ENCODE measurements at regions of chr1 and their contacts with region 1.

Region 1: DNA sequence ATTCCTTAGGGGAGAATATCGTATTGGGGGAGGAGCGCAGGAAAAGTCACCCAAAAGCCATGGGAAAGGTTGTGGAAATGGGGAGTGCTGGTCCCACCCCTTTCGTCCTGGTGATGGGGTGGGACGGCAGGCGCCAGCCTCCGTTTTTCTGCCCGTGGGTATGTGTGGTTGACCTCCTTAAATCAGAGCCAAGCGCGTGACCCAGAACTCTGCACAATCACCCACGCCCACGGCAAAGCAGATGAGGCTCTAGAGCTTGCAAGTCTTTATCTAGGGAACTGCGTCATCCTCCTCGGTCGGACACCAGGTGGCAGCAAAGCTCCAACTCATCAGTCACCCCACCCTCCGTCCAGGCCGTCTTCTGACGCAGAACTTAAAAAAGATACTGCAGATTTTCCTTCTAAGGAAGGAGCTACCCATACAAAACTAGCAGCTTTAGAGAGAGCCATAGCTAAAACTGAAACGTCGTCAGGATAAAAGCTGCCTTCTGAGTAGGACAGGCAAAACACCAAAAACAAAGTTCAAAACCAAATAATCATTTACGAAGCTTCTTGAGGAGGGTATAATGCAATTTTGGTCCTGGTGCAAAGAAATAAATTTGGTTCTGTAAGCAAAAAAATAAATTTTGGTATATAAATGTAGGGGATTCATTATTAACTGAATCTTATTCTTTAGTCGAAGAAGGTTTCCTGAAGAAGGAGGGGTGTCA is 62.0 kb downstream of the TBX19 start:
- DNase-seq: peak; percentile 94
- ATAC-seq: peak; percentile 98
- H3K4me3 Mint-ChIP-seq: no peak overlapping the region
- H3K27ac Mint-ChIP-seq: peak overlapping the region; percentile 64
- H3K4me1 Mint-ChIP-seq: peaks cover 35% of the 10 kb centered on the region
- H3K27me3 Mint-ChIP-seq: peaks cover 4% of the 10 kb centered on the region
- CTCF ChIP-seq: peak; percentile 77

Region 2: DNA sequence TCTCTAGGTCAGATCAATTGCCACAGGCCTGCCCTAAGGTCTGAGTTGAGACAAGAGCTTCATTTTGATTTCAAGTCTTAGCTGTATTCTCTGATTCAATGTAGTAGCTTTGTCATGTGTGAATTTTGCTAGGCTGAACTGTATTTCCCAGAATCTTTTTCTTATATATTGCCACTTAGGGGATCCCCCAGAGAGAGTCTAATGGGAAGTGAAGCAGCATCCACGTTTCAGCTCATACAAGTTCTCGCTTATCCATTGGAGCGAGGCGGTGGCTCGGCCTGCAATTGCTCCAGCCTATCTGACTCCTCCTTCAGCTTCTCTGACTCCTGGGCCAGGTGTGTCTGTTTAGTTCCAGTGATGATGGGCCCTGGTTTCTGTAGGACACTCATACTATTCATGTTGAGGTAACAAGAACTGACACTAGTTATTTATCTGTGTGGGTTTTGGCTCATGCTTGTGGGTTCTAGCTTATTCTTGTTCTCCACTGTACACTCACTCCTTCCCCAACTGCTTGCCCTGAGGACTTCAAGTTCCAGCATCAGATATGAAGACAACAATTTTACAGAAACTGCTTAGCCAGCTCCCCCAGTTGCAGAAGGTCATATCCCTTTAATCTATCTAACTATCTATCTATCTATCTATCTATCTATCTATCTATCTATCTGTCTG is 13.9 kb before region 1 on chr1:
- CTCF ChIA-PET with region 1: interaction called, 21 read pairs
- POLR2A ChIA-PET with region 1: interaction called, 3 read pairs
- intact Hi-C with region 1: no loop called
- DNase-seq: no peak
- ATAC-seq: no peak
- H3K4me3 Mint-ChIP-seq: no peak overlapping the region
- H3K27ac Mint-ChIP-seq: no peak overlapping the region
- H3K4me1 Mint-ChIP-seq: no peaks in the 10 kb centered on the region
- H3K27me3 Mint-ChIP-seq: no peaks in the 10 kb centered on the region
- CTCF ChIP-seq: no peak

Region 3: DNA sequence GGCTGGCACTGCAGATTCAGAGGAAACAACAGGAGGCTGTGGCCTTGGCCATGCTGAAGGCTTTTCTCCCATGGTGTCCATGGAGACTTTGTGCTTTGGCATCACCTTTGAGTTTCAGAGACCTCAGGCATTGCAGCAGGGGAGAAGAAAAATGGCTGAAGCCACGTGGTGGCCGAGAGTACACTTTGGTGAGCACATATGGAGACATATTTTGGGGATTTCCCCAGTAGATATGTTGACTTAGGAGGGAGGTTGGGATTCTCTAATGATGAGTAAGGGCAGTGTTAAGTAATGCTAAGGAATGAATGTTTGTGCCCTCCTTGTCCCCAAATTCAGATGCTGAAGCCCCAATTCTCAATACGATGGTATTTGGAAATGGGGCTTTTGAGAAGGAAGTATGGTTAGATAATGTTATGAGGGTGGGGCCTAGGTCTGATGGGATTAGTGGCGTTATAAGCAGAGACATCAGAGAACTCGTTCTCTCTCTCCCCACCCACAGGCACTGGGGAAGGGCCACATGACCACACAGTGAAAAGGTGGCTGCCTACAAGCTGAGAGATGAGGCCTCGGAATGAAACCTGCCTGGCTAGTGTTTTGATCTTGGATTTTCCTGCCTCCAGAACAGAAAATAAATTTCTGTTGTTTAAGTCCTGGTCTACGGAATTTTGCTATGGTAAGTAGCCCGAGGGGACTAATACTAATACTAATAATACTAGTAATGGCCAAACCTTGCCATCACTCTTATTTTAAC is 36.6 kb after region 1 on chr1:
- CTCF ChIA-PET with region 1: interaction called, 18 read pairs
- POLR2A ChIA-PET with region 1: no interaction called
- intact Hi-C with region 1: no loop called
- DNase-seq: no peak
- ATAC-seq: no peak
- H3K4me3 Mint-ChIP-seq: no peak overlapping the region
- H3K27ac Mint-ChIP-seq: no peak overlapping the region
- H3K4me1 Mint-ChIP-seq: no peaks in the 10 kb centered on the region
- H3K27me3 Mint-ChIP-seq: no peaks in the 10 kb centered on the region
- CTCF ChIP-seq: no peak

Region 4: DNA sequence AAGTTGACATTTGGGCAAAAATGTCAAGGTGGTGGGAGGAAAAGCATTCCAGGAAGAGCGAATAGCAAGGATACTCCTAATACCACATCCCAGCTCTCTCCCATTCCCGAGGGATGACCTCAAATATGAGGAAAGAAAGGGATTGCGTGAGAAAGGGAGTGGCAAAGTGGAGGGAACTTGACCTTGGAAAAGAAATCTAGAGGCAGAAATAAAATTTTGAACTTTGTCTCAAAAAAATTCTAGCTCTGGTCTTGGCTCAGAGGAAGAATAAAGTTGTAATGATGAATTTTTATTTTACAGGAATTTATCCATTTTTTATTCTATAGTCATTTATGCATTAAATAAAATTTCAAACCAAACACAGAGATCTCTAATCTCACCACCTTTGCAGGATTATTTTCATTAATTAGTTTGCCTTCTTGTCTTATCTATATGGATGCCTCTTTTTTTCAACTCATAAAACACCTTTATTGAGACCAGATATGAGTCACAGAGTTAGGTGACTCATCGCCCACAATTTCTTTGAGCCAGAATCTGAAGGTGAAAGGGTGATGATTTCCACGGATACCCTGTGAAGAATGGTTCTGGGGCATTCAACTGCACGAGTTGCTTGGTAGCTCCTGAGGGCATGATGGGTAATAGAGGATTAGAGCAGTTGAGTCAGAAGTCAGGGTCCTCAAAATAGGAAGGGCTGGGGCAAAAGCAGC is 66.0 kb after region 1 on chr1:
- CTCF ChIA-PET with region 1: interaction called, 20 read pairs
- POLR2A ChIA-PET with region 1: no interaction called
- intact Hi-C with region 1: no loop called
- DNase-seq: peak; percentile 83
- ATAC-seq: peak; percentile 89
- H3K4me3 Mint-ChIP-seq: peak overlapping the region; percentile 43
- H3K27ac Mint-ChIP-seq: peak overlapping the region; percentile 81
- H3K4me1 Mint-ChIP-seq: peaks cover 44% of the 10 kb centered on the region
- H3K27me3 Mint-ChIP-seq: no peaks in the 10 kb centered on the region
- CTCF ChIP-seq: no peak

Region 5: DNA sequence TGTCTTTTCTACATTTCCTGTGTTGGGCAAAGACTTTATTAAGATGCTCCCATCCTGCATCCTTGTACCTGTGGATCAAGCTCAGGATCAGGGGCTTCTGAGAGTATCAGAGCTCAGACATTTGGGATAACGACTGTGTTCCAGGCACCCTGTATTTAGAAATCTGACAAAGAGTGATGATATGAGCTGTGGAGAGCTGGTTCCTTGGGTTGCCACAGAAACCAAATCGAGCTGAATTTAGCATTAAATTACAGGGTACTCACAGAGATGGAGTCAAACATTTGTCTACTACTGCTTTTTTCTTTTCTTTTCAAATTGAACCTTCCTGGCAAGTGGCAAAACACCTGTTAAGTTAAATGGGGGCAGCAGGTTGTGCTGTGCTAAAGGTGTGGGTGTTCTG is 90.5 kb after region 1 on chr1:
- CTCF ChIA-PET with region 1: interaction called, 75 read pairs
- POLR2A ChIA-PET with region 1: interaction called, 3 read pairs
- intact Hi-C with region 1: loop called (anchors 5 kb)
- DNase-seq: no peak
- ATAC-seq: no peak
- H3K4me3 Mint-ChIP-seq: no peak overlapping the region
- H3K27ac Mint-ChIP-seq: no peak overlapping the region
- H3K4me1 Mint-ChIP-seq: peaks cover 2% of the 10 kb centered on the region
- H3K27me3 Mint-ChIP-seq: no peaks in the 10 kb centered on the region
- CTCF ChIP-seq: no peak

Region 6: DNA sequence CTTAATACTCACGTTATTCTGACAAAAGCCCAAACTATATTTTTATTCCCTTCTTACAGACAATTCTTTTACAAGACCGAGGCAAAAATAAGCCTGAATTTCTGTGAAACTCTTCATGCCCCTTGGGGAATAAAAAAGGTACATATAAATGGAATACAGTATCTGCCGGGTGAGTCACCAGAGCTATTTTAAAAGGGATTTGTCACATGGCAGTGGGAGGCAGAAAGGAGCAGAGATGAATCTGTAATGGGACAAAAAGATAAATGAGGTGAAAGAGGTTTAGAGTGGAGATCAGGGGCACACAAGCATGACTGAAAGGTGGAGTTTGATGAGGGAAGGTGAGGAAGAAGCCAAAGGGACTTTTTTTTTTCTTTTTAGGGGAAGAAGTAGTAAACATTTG is 242.5 kb after region 1 on chr1:
- CTCF ChIA-PET with region 1: interaction called, 4 read pairs
- POLR2A ChIA-PET with region 1: no interaction called
- intact Hi-C with region 1: loop called (anchors 10 kb)
- DNase-seq: no peak
- ATAC-seq: no peak
- H3K4me3 Mint-ChIP-seq: no peak overlapping the region
- H3K27ac Mint-ChIP-seq: no peak overlapping the region
- H3K4me1 Mint-ChIP-seq: peaks cover 2% of the 10 kb centered on the region
- H3K27me3 Mint-ChIP-seq: no peaks in the 10 kb centered on the region
- CTCF ChIP-seq: no peak

Region 7: GRCh38 chr1:169367486-169368405 is 1025.0 kb after region 1 on chr1 and contains the starts of genes BLZF1 and NME7:
- CTCF ChIA-PET with region 1: no interaction called
- POLR2A ChIA-PET with region 1: interaction called, 3 read pairs
- intact Hi-C with region 1: loop called (anchors 10 kb)
- DNase-seq: peak; percentile 99
- ATAC-seq: peak; percentile 93
- H3K4me3 Mint-ChIP-seq: no peak within 1 kb of the TSS
- H3K27ac Mint-ChIP-seq: no peak within 1 kb of the TSS
- H3K4me1 Mint-ChIP-seq: peaks cover 39% of the 10 kb centered on the region
- H3K27me3 Mint-ChIP-seq: no peaks in the 10 kb centered on the region
- CTCF ChIP-seq: no peak
- total RNA-seq, gene BLZF1: 9.8 to 10.1 TPM
- total RNA-seq, gene NME7: 15.3 to 17.4 TPM